Activated CD4-positive, alpha-beta T cell treated with anti-CD3 and anti-CD28 coated beads for 36 hours (primary cell): ENCODE measurements at regions of chr22 and their contacts with region 1.

Region 1: DNA sequence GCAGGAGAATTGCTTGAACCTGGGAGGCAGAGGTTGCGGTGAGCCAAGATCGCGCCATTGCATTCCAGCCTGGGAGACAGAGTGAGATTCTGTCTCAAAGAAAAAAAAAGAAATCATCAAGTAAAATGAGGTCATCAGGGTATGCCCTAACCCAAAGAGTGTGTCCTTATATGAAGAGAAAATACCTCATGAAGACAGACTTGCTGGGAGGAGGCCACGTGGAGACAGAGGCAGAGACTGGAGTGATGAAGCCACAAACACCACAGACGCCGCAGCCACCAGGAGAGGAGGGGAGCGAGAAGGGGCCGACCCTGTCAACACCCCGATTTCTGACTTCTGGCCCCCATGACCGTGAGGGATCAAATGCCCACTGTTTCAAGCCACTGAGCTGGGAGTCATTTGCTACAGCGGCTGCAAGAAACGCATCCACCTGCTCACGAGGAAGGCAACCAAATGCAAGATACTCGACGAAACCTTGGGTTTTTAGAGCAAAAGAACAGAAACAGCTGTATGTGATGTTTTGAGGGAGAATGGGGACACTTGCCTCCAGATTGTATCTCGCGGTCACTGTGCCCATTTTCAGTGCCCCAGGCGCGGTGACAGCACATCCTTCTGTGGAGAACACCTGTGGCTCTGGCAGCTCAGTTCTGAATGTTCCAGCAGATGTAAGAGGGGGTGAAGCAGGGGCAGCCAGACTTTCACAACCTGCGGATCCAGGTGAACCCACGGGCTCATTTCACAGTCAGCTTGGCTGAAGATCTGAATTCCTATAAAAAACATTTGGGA is 1317.2 kb downstream of the TBC1D22A start:
- DNase-seq: no peak
- ATAC-seq: no peak
- H3K4me3 Mint-ChIP-seq: no peak overlapping the region
- H3K27ac Mint-ChIP-seq: no peak overlapping the region
- H3K4me1 Mint-ChIP-seq: peaks cover 9% of the 10 kb centered on the region
- H3K27me3 Mint-ChIP-seq: peaks cover 47% of the 10 kb centered on the region

Region 2: GRCh38 chr22:48098243-48098920 is 18.7 kb after region 1 on chr22:
- CTCF ChIA-PET with region 1: no interaction called
- POLR2A ChIA-PET with region 1: no interaction called
- intact Hi-C with region 1: loop called in 1 of 2 experiments (anchors 1 kb)
- DNase-seq: peak; percentile 43
- ATAC-seq: peak; percentile 93
- H3K4me3 Mint-ChIP-seq: no peak overlapping the region
- H3K27ac Mint-ChIP-seq: peak overlapping the region; percentile 45
- H3K4me1 Mint-ChIP-seq: peaks cover 21% of the 10 kb centered on the region
- H3K27me3 Mint-ChIP-seq: peaks cover 5% of the 10 kb centered on the region

Region 3: DNA sequence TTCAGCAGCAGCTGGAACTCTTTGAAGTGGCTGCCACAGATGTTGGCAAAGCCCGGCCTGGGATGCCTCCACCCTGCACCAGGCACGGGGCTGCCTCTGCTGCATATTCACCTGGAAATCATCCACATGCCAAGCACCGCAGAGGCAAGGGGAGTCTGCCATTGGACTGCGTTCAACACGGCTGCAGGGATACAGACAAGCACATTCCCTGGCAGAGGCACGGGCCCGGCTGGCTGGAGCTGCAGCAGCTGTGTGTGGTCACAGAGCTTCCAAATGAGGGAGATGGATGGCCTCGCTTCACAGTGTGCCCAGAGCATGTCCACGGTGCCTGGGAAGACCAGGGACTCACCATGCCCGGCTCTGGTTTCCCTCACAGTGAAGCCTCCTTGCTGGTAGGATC is 61.6 kb after region 1 on chr22:
- CTCF ChIA-PET with region 1: no interaction called
- POLR2A ChIA-PET with region 1: no interaction called
- intact Hi-C with region 1: no loop called
- DNase-seq: no peak
- ATAC-seq: no peak
- H3K4me3 Mint-ChIP-seq: no peak overlapping the region
- H3K27ac Mint-ChIP-seq: no peak overlapping the region
- H3K4me1 Mint-ChIP-seq: peaks cover 9% of the 10 kb centered on the region
- H3K27me3 Mint-ChIP-seq: peaks cover 9% of the 10 kb centered on the region